Transverse colon (tissue), 4 donors: ENCODE measurements at regions of chr10 and their contacts with region 1.

Region 1: DNA sequence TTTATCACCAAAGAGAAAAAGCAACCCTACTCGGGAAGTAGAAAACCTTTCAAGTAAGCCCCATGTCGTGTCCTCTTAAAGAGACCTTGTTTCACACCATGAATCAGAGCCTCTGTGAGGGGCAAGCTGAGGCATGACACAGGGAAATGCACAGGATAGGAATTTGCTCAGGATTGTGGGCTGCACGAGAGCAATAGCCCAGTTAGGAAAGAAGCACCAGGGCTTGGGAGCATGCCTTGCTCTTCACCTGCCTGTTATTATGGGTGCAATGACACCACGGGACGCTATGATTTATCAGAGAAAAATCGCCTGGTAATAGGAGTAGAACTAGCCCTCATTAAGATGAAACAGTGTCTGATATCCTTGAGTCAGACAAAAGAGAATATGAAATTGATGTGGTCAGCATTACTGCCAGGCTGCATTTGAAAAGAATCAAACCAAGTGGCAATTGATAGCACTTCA is 562.9 kb upstream of the NRP1 start:
- DNase-seq: no peak
- H3K4me3 ChIP-seq: no peak overlapping the region
- H3K27ac ChIP-seq: no peak overlapping the region
- H3K4me1 ChIP-seq: peaks cover 0 to 6% (median 0%) of the 10 kb centered on the region in 4 donors
- H3K27me3 ChIP-seq: no peaks in the 10 kb centered on the region
- CTCF ChIP-seq: no peak
- EP300 ChIP-seq: no peak
- POLR2A ChIP-seq: no peak

Region 2: DNA sequence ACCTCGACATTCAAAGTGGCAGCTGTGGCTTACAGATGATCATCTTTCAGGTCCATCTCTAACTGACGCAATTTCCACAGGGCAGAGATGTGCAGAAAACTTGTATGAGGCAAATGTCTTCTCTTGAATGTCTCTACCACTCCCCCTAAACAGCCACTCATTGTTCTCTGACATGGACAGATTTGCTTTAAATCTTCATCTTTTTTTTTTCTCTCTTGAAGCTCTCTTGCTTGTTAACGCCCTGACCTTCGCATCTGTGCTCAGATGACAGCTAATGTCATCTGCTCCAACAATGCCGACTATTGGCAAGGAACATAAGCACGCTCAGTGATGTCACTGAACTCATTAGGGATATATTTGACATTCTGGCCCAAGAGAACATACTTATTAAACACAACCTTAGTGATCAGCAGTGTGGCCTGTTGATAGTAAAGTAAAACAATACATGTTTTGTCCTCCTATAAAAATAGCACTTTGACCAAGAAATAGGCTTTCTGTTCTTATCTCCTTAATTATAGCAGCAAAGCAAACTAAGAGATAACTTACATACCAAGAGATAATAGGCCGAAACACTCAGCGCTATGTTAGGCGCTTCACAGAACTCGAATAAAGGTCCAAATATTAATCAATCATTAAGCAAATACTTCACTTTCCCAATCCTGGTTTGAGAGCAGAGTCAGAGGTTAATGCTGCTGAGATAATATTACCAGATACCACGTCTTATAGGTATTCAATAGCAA is 334.3 kb after region 1 on chr10:
- in situ Hi-C with region 1: no loop called
- intact Hi-C with region 1: loop called (anchors 5 kb)
- DNase-seq: no peak
- H3K4me3 ChIP-seq: no peak overlapping the region
- H3K27ac ChIP-seq: no peak overlapping the region
- H3K4me1 ChIP-seq: peaks cover 0 to 4% (median 0%) of the 10 kb centered on the region in 4 donors
- H3K27me3 ChIP-seq: no peaks in the 10 kb centered on the region
- CTCF ChIP-seq: no peak
- EP300 ChIP-seq: no peak
- POLR2A ChIP-seq: no peak